ENCODE measurements at regions of chr2 and their contacts with region 1.

Region 1: GRCh38 chr2:37389989-37390765 is 45.7 kb downstream of the QPCT start:
- DNase-seq: peak; percentile 44 to 91
- H3K4me3 ChIP-seq: no peak overlapping the region
- H3K27ac ChIP-seq: peak overlapping the region; percentile 63
- H3K4me1 ChIP-seq: peaks cover 36% of the 10 kb centered on the region
- H3K27me3 ChIP-seq: no peaks in the 10 kb centered on the region
- CTCF ChIP-seq: no peak

Region 2: GRCh38 chr2:37168217-37168981 is 221.8 kb before region 1 on chr2:
- CTCF ChIA-PET with region 1: no interaction called
- POLR2A ChIA-PET with region 1: no interaction called
- intact Hi-C with region 1: loop called (anchors 10 kb)
- DNase-seq: peak in 1 of 2 experiments; percentile 38
- H3K4me3 ChIP-seq: no peak overlapping the region
- H3K27ac ChIP-seq: no peak overlapping the region
- H3K4me1 ChIP-seq: peaks cover 11% of the 10 kb centered on the region
- H3K27me3 ChIP-seq: no peaks in the 10 kb centered on the region
- CTCF ChIP-seq: peak; percentile 83

Region 3: GRCh38 chr2:37287966-37288365 is 102.2 kb before region 1 on chr2:
- CTCF ChIA-PET with region 1: no interaction called
- POLR2A ChIA-PET with region 1: no interaction called
- intact Hi-C with region 1: loop called (anchors 5 kb)
- DNase-seq: no peak
- H3K4me3 ChIP-seq: no peak overlapping the region
- H3K27ac ChIP-seq: no peak overlapping the region
- H3K4me1 ChIP-seq: no peaks in the 10 kb centered on the region
- H3K27me3 ChIP-seq: no peaks in the 10 kb centered on the region
- CTCF ChIP-seq: peak; percentile 45; the same call in 1 of the 2 replicates

Region 4: GRCh38 chr2:37966326-37966725 is 576.1 kb after region 1 on chr2:
- CTCF ChIA-PET with region 1: no interaction called
- POLR2A ChIA-PET with region 1: no interaction called
- intact Hi-C with region 1: loop called (anchors 5 kb)
- DNase-seq: no peak
- H3K4me3 ChIP-seq: no peak overlapping the region
- H3K27ac ChIP-seq: no peak overlapping the region
- H3K4me1 ChIP-seq: peaks cover 11% of the 10 kb centered on the region; the same call in 1 of the 2 replicates
- H3K27me3 ChIP-seq: no peaks in the 10 kb centered on the region
- CTCF ChIP-seq: no peak

Measured in PC-9 (cell line).